ENCODE measurements at regions of chr18 and their contacts with region 1.

Region 1: DNA sequence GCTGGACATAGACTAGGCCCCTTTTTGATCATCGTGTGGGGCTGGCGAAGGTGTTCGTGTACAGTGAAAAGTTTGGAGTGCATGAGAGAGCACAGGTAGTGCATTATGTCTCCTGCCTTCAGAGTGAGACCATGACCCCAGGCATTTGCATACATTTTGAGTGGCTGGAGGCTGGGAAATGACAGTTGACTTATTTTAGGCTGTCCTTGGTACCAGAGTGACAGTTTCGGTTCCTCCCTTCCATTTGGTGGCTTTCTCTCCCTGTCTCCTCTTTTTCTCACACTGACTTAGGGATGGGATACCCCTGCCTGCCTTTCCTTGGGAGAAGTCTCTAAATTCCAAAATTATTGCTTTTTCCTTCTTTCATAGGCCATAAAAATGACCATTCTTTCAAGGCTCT is 20.1 kb downstream of the SERPINB12 start:
- DNase-seq: no peak
- ATAC-seq: no peak
- H3K4me3 ChIP-seq: no peak overlapping the region
- H3K27ac ChIP-seq: no peak overlapping the region
- H3K4me1 ChIP-seq: no peaks in the 10 kb centered on the region
- CTCF ChIP-seq: no peak
- EP300 ChIP-seq: no peak
- POLR2A ChIP-seq: no peak
- RAD21 ChIP-seq: no peak

Region 2: GRCh38 chr18:63224630-63225029 is 337.7 kb before region 1 on chr18:
- CTCF ChIA-PET with region 1: no interaction called
- POLR2A ChIA-PET with region 1: no interaction called
- DNase-seq: no peak
- ATAC-seq: no peak
- H3K4me3 ChIP-seq: no peak overlapping the region
- H3K27ac ChIP-seq: no peak overlapping the region
- H3K4me1 ChIP-seq: no peaks in the 10 kb centered on the region
- CTCF ChIP-seq: no peak
- EP300 ChIP-seq: no peak
- POLR2A ChIP-seq: no peak
- RAD21 ChIP-seq: no peak

Region 3: DNA sequence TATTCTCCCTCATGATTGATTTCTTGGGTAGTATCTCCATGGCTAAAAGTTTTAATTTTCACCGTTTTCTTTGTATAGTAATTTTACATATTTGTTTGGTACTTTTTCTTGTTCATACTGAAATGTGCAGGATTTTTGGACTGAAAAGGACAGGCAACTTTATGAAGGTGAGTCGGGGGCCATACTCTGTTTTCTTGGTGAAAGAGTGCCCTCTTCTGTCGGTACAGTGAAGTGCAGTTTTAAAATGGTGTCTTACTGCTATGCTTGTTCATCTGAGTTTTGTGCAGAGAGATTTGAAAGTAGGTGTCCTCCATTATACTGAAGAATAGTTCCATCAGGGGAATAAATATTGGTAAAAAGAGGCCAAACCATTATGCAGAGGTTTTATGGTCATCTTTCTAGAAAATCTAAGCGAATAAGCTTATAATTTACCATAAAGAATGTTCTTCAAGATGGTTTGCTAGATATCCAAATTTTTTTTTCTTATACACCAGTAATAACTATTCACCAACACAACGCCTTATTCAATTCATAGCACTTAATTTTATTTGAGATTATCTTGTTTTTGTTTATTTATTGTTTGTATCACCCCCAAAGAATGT is 16.2 kb after region 1 on chr18:
- CTCF ChIA-PET with region 1: interaction called, 31 read pairs
- POLR2A ChIA-PET with region 1: no interaction called
- DNase-seq: peak in 1 of 2 experiments; percentile 37
- ATAC-seq: peak in 1 of 2 experiments; percentile 57; a peak in 3 of 6 replicates
- H3K4me3 ChIP-seq: no peak overlapping the region
- H3K27ac ChIP-seq: no peak overlapping the region
- H3K4me1 ChIP-seq: no peaks in the 10 kb centered on the region
- CTCF ChIP-seq: peak; percentile 50
- EP300 ChIP-seq: no peak
- POLR2A ChIP-seq: no peak
- RAD21 ChIP-seq: peak; percentile 42 to 68; a peak in 4 of 5 replicates

Region 4: GRCh38 chr18:63590373-63590772 is 28.1 kb after region 1 on chr18:
- CTCF ChIA-PET with region 1: no interaction called
- POLR2A ChIA-PET with region 1: no interaction called
- DNase-seq: no peak
- ATAC-seq: no peak
- H3K4me3 ChIP-seq: no peak overlapping the region
- H3K27ac ChIP-seq: no peak overlapping the region
- H3K4me1 ChIP-seq: no peaks in the 10 kb centered on the region
- CTCF ChIP-seq: no peak
- EP300 ChIP-seq: no peak
- POLR2A ChIP-seq: no peak
- RAD21 ChIP-seq: no peak